GM12878 (cell line): ENCODE measurements at regions of chr2 and their contacts with region 1.

Region 1: GRCh38 chr2:217785544-217786045 is 217.2 kb downstream of the TNS1 start:
- DNase-seq: no peak
- ATAC-seq: peak; percentile 88
- H3K4me3 ChIP-seq: no peak overlapping the region
- H3K27ac ChIP-seq: no peak overlapping the region
- H3K4me1 ChIP-seq: peaks cover 3% of the 10 kb centered on the region; the same call in 1 of the 2 replicates
- H3K27me3 ChIP-seq: no peaks in the 10 kb centered on the region
- CTCF ChIP-seq: peak; percentile 95 to 98 (median 96)
- EP300 ChIP-seq: no peak
- POLR2A ChIP-seq: no peak
- RAD21 ChIP-seq: peak; percentile 85

Region 2: GRCh38 chr2:217713395-217714286 is 72.0 kb before region 1 on chr2:
- CTCF ChIA-PET with region 1: no interaction called
- POLR2A ChIA-PET with region 1: no interaction called
- RAD21 ChIA-PET with region 1: no interaction called
- SMC1A ChIA-PET with region 1: no interaction called
- in situ Hi-C with region 1: no loop called
- intact Hi-C with region 1: no loop called
- DNase-seq: no peak
- ATAC-seq: peak; percentile 91
- H3K4me3 ChIP-seq: no peak overlapping the region
- H3K27ac ChIP-seq: no peak overlapping the region
- H3K4me1 ChIP-seq: no peaks in the 10 kb centered on the region
- H3K27me3 ChIP-seq: peaks cover 2 to 3% of the 10 kb centered on the region in 2 experiments; a peak in 3 of 4 replicates
- CTCF ChIP-seq: peak; percentile 81 to 96 (median 91)
- EP300 ChIP-seq: no peak
- POLR2A ChIP-seq: no peak
- RAD21 ChIP-seq: peak; percentile 95

Region 3: GRCh38 chr2:217798743-217799562 is 13.4 kb after region 1 on chr2:
- CTCF ChIA-PET with region 1: interaction called, 15 read pairs
- POLR2A ChIA-PET with region 1: no interaction called
- RAD21 ChIA-PET with region 1: no interaction called
- SMC1A ChIA-PET with region 1: interaction called, 3 read pairs
- in situ Hi-C with region 1: no loop called
- intact Hi-C with region 1: no loop called
- DNase-seq: no peak
- ATAC-seq: peak; percentile 86
- H3K4me3 ChIP-seq: no peak overlapping the region
- H3K27ac ChIP-seq: no peak overlapping the region
- H3K4me1 ChIP-seq: peaks cover 4% of the 10 kb centered on the region
- H3K27me3 ChIP-seq: no peaks in the 10 kb centered on the region
- CTCF ChIP-seq: no peak
- EP300 ChIP-seq: no peak
- POLR2A ChIP-seq: no peak
- RAD21 ChIP-seq: no peak

Region 4: GRCh38 chr2:217980036-217980435 is 194.4 kb after region 1 on chr2:
- CTCF ChIA-PET with region 1: interaction called, 3 read pairs
- POLR2A ChIA-PET with region 1: no interaction called
- RAD21 ChIA-PET with region 1: no interaction called
- SMC1A ChIA-PET with region 1: interaction called, 3 read pairs
- in situ Hi-C with region 1: loop called (anchors 5 kb)
- intact Hi-C with region 1: no loop called
- DNase-seq: no peak
- ATAC-seq: no peak
- H3K4me3 ChIP-seq: no peak overlapping the region
- H3K27ac ChIP-seq: no peak overlapping the region
- H3K4me1 ChIP-seq: no peaks in the 10 kb centered on the region
- H3K27me3 ChIP-seq: no peaks in the 10 kb centered on the region
- CTCF ChIP-seq: no peak
- EP300 ChIP-seq: no peak
- POLR2A ChIP-seq: no peak
- RAD21 ChIP-seq: no peak

Region 5: DNA sequence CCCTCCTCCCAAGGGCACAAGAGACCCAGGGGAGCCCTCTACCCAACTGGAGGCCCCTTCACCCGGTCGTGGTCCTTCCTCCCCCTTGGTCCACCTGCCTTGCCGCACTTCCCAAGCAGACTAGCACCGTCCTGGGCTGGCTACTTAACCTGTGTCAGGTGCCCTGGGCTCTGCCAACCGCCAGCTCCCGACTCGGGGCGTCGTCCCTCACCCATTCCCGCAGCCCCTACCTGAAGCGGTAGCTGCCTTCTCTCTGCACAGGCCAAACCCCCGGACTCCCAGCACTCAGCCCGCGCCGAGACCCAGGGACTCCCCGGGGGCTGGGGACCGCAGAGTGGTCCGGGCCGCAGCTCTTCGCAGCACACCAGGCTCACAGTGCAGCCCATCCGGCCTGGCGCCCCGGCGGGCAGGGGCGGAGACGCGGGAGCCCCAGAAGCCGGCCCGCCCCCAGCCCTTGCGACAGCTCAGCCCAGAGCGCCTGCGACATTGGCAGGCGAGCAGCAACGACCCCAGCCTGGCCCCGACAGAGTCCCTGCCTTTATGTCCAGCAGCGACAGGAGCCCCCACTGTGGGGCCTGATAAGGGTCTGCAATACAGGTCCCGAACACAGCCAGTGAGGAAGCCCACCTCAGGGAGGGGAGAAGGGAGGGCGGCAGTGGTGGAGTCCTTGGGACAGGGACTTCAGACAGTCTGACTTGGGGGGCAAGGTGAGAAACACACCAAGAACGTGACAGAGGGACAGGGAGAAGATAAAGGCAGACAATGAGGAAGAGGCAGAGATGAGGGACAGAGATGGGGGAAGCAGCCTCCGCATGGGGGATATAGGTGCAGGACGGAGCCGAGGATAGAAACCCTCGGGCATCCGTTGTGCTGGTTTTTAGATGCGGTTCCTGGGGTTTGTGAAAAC is 248.2 kb after region 1 on chr2:
- CTCF ChIA-PET with region 1: interaction called, 31 read pairs
- POLR2A ChIA-PET with region 1: no interaction called
- RAD21 ChIA-PET with region 1: interaction called, 8 read pairs
- SMC1A ChIA-PET with region 1: interaction called, 11 read pairs
- in situ Hi-C with region 1: no loop called
- intact Hi-C with region 1: no loop called
- DNase-seq: no peak
- ATAC-seq: peak; percentile 23
- H3K4me3 ChIP-seq: no peak overlapping the region
- H3K27ac ChIP-seq: no peak overlapping the region
- H3K4me1 ChIP-seq: peaks cover 25% of the 10 kb centered on the region
- H3K27me3 ChIP-seq: no peaks in the 10 kb centered on the region; a peak in 1 of 4 replicates
- CTCF ChIP-seq: no peak
- EP300 ChIP-seq: no peak
- POLR2A ChIP-seq: no peak
- RAD21 ChIP-seq: no peak

Region 6: GRCh38 chr2:218063486-218063885 is 277.9 kb after region 1 on chr2:
- CTCF ChIA-PET with region 1: interaction called, 16 read pairs
- POLR2A ChIA-PET with region 1: no interaction called
- RAD21 ChIA-PET with region 1: interaction called, 13 read pairs
- SMC1A ChIA-PET with region 1: interaction called, 6 read pairs
- in situ Hi-C with region 1: loop called (anchors 5 kb)
- intact Hi-C with region 1: loop called (anchors 1 kb)
- DNase-seq: peak; percentile 60
- ATAC-seq: peak; percentile 94
- H3K4me3 ChIP-seq: no peak overlapping the region
- H3K27ac ChIP-seq: no peak overlapping the region
- H3K4me1 ChIP-seq: peaks cover 15% of the 10 kb centered on the region
- H3K27me3 ChIP-seq: no peaks in the 10 kb centered on the region; a peak in 1 of 4 replicates
- CTCF ChIP-seq: no peak
- EP300 ChIP-seq: no peak
- POLR2A ChIP-seq: no peak
- RAD21 ChIP-seq: no peak

Region 7: GRCh38 chr2:218360447-218360846 is 574.9 kb after region 1 on chr2:
- CTCF ChIA-PET with region 1: no interaction called
- POLR2A ChIA-PET with region 1: no interaction called
- RAD21 ChIA-PET with region 1: no interaction called
- SMC1A ChIA-PET with region 1: no interaction called
- in situ Hi-C with region 1: no loop called
- intact Hi-C with region 1: no loop called
- DNase-seq: no peak
- ATAC-seq: no peak
- H3K4me3 ChIP-seq: no peak overlapping the region
- H3K27ac ChIP-seq: no peak overlapping the region
- H3K4me1 ChIP-seq: peaks cover 7% of the 10 kb centered on the region
- H3K27me3 ChIP-seq: no peaks in the 10 kb centered on the region
- CTCF ChIP-seq: no peak
- EP300 ChIP-seq: no peak
- POLR2A ChIP-seq: no peak
- RAD21 ChIP-seq: no peak